Common myeloid progenitor, CD34-positive (primary cell): ENCODE measurements at regions of chr9 and their contacts with region 1.

Region 1: DNA sequence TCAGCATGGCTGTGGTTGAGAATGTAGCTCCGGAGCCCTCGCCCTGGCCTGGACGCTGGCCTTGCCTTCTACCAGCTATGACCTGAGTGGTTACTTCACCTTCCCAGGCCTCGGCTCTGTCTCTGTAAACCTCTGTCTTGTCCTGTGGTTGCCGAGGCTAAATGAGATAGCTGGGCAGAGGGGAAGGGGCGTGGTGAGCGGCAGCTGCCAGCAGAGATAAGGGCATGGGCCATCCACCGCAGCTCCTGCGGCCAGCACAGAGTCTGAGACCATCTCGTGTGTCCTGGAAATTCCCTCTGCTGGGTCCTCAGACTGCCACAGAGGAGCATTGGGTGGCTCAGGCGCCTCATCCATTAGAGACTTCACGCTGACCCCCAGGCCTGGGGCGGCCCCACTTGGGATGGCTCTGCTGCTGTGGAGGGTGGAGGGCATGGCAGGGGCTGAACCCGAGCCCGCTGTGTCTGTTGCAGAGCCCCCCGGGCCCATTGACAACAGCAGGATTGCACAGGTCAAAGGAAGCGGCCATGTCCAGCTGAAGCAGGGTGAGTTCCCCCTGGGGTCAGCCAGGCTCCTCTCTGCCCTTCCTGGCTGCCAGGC is 43.9 kb downstream of the USP20 start:
- DNase-seq: peak; percentile 84 to 97 (median 94)
- H3K4me3 ChIP-seq: peak overlapping the region in 3 of 7 experiments; percentile 4 to 43 (median 38)
- H3K27ac ChIP-seq: peak overlapping the region in 1 of 2 experiments; percentile 54
- H3K4me1 ChIP-seq: peaks cover 7 to 22% (median 12%) of the 10 kb centered on the region in 4 experiments
- H3K27me3 ChIP-seq: no peaks in the 10 kb centered on the region

Region 2: DNA sequence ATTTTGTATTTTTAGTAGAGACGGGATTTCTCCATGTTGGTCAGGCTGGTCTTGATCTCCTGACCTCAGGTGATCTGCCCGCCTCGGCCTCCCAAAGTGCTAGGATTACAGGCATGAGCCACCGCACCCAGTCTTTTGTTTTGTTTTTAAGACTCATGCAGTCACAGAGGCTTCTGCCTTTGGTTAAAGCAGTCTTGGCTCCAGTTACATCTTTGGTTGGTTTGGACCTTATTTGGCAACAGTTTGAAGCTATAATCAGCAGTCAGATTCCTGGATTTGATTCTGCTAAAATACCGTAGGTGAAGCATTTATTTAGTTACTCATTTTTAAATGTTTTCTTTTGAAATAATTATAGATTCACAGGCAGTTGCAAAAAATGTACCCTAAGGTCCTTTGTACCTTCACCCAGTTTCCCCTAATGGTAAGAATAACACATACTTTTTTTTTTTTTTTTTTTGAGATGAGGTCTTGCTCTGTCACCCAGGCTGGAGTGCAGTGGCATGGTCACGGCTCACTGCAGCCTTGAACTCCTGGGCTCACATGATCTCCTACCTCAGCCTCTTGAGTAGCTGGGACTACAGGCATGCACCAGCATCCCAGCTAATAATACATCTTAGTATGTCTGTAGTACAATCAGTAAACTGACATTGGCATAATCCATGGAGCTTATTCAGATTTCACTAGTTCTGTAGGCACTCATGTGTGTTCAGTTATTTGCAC is 28.2 kb before region 1 on chr9:
- CTCF ChIA-PET with region 1: interaction called, 12 read pairs
- POLR2A ChIA-PET with region 1: no interaction called
- DNase-seq: no peak
- H3K4me3 ChIP-seq: no peak overlapping the region
- H3K27ac ChIP-seq: no peak overlapping the region
- H3K4me1 ChIP-seq: peaks cover 0 to 16% (median 3%) of the 10 kb centered on the region in 4 experiments
- H3K27me3 ChIP-seq: no peaks in the 10 kb centered on the region

Region 3: GRCh38 chr9:129863059-129863690 is 16.0 kb before region 1 on chr9:
- CTCF ChIA-PET with region 1: interaction called, 17 read pairs
- POLR2A ChIA-PET with region 1: interaction called, 16 read pairs
- DNase-seq: peak; percentile 98 to 100 (median 100)
- H3K4me3 ChIP-seq: peak overlapping the region in 3 of 7 experiments; percentile 26 to 62 (median 38)
- H3K27ac ChIP-seq: peak overlapping the region in 1 of 2 experiments; percentile 71
- H3K4me1 ChIP-seq: peaks cover 11 to 71% (median 49%) of the 10 kb centered on the region in 4 experiments
- H3K27me3 ChIP-seq: no peaks in the 10 kb centered on the region

Region 4: GRCh38 chr9:129932303-129933151 is 53.3 kb after region 1 on chr9:
- CTCF ChIA-PET with region 1: no interaction called
- POLR2A ChIA-PET with region 1: no interaction called
- DNase-seq: peak in 1 of 3 donors; percentile 40
- H3K4me3 ChIP-seq: peak overlapping the region in 3 of 7 experiments; percentile 19 to 28 (median 22)
- H3K27ac ChIP-seq: peak overlapping the region; percentile 30 to 35
- H3K4me1 ChIP-seq: peaks cover 5 to 43% (median 30%) of the 10 kb centered on the region in 4 experiments
- H3K27me3 ChIP-seq: no peaks in the 10 kb centered on the region